ENCODE measurements at regions of chr5 and their contacts with region 1.

Region 1: GRCh38 chr5:119411935-119412602 is 40.2 kb upstream of the HSD17B4 start:
- DNase-seq: peak; percentile 66
- ATAC-seq: peak; percentile 84
- H3K4me3 Mint-ChIP-seq: peak overlapping the region; percentile 78
- H3K27ac Mint-ChIP-seq: peak overlapping the region; percentile 80
- H3K4me1 Mint-ChIP-seq: peaks cover 41% of the 10 kb centered on the region
- H3K27me3 Mint-ChIP-seq: no peaks in the 10 kb centered on the region
- CTCF ChIP-seq: peak; percentile 93

Region 2: GRCh38 chr5:118775799-118776499 is 636.1 kb before region 1 on chr5:
- CTCF ChIA-PET with region 1: no interaction called
- POLR2A ChIA-PET with region 1: no interaction called
- intact Hi-C with region 1: no loop called
- DNase-seq: no peak
- ATAC-seq: no peak
- H3K4me3 Mint-ChIP-seq: no peak overlapping the region
- H3K27ac Mint-ChIP-seq: no peak overlapping the region
- H3K4me1 Mint-ChIP-seq: no peaks in the 10 kb centered on the region
- H3K27me3 Mint-ChIP-seq: peaks cover 3% of the 10 kb centered on the region
- CTCF ChIP-seq: no peak

Region 3: DNA sequence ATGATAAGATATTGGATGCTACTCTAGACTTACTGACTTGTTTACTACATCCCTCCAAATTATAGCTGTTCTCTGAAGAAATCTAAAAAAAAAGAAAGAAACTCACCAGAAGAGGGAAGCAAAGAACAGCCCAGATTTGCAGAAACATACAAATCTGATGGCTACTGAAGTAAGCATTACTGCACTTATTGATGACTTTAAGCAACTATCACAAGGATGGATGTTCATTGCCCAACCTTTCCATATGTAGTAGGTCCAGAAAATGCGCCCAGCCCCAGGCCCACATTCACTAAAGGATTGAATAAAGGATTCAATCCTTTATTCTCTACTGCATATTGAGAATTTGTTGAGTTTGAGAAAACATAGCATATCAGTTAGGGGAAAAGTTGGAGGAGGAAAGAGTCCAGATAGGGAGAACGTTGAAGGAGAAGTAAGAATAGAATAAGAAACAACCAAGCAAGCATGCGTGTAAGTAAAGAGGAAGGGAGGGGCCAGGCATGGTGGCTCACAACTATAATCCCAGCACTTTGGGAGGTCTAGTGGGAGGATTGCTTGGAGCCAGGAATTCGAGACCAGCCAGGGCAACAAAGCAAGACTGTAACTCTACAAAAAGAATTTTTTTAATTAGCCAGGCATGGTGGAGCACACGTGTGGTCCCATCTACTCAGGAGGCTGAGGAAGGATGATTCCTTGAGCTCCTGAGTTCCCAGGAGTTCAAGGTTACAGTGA is 389.9 kb before region 1 on chr5:
- CTCF ChIA-PET with region 1: interaction called, 21 read pairs
- POLR2A ChIA-PET with region 1: interaction called, 3 read pairs
- intact Hi-C with region 1: loop called (anchors 5 kb)
- DNase-seq: no peak
- ATAC-seq: peak; percentile 72
- H3K4me3 Mint-ChIP-seq: no peak overlapping the region
- H3K27ac Mint-ChIP-seq: no peak overlapping the region
- H3K4me1 Mint-ChIP-seq: peaks cover 8% of the 10 kb centered on the region
- H3K27me3 Mint-ChIP-seq: no peaks in the 10 kb centered on the region
- CTCF ChIP-seq: peak; percentile 56

Region 4: GRCh38 chr5:119267958-119268386 is 144.1 kb before region 1 on chr5:
- CTCF ChIA-PET with region 1: interaction called, 22 read pairs
- POLR2A ChIA-PET with region 1: interaction called, 3 read pairs
- intact Hi-C with region 1: loop called (anchors 5 kb)
- DNase-seq: peak; percentile 97
- ATAC-seq: peak; percentile 80
- H3K4me3 Mint-ChIP-seq: peak overlapping the region; percentile 95
- H3K27ac Mint-ChIP-seq: peak overlapping the region; percentile 96
- H3K4me1 Mint-ChIP-seq: peaks cover 65% of the 10 kb centered on the region
- H3K27me3 Mint-ChIP-seq: no peaks in the 10 kb centered on the region
- CTCF ChIP-seq: peak; percentile 91

Region 5: GRCh38 chr5:119302916-119303897 is 108.9 kb before region 1 on chr5:
- CTCF ChIA-PET with region 1: interaction called, 13 read pairs
- POLR2A ChIA-PET with region 1: no interaction called
- intact Hi-C with region 1: no loop called
- DNase-seq: no peak
- ATAC-seq: peak; percentile 46
- H3K4me3 Mint-ChIP-seq: no peak overlapping the region
- H3K27ac Mint-ChIP-seq: peak overlapping the region; percentile 88
- H3K4me1 Mint-ChIP-seq: peaks cover 91% of the 10 kb centered on the region
- H3K27me3 Mint-ChIP-seq: no peaks in the 10 kb centered on the region
- CTCF ChIP-seq: no peak

Region 6: GRCh38 chr5:119335261-119335677 is 76.8 kb before region 1 on chr5:
- CTCF ChIA-PET with region 1: interaction called, 25 read pairs
- POLR2A ChIA-PET with region 1: interaction called, 4 read pairs
- intact Hi-C with region 1: no loop called
- DNase-seq: no peak
- ATAC-seq: no peak
- H3K4me3 Mint-ChIP-seq: peak overlapping the region; percentile 66
- H3K27ac Mint-ChIP-seq: peak overlapping the region; percentile 95
- H3K4me1 Mint-ChIP-seq: peaks cover 93% of the 10 kb centered on the region
- H3K27me3 Mint-ChIP-seq: no peaks in the 10 kb centered on the region
- CTCF ChIP-seq: no peak

Region 7: GRCh38 chr5:119367502-119368237 is 44.4 kb before region 1 on chr5:
- CTCF ChIA-PET with region 1: interaction called, 29 read pairs
- POLR2A ChIA-PET with region 1: interaction called, 9 read pairs
- intact Hi-C with region 1: no loop called
- DNase-seq: peak; percentile 48
- ATAC-seq: peak; percentile 65
- H3K4me3 Mint-ChIP-seq: peak overlapping the region; percentile 67
- H3K27ac Mint-ChIP-seq: peak overlapping the region; percentile 99
- H3K4me1 Mint-ChIP-seq: peaks cover 81% of the 10 kb centered on the region
- H3K27me3 Mint-ChIP-seq: no peaks in the 10 kb centered on the region
- CTCF ChIP-seq: no peak

Region 8: DNA sequence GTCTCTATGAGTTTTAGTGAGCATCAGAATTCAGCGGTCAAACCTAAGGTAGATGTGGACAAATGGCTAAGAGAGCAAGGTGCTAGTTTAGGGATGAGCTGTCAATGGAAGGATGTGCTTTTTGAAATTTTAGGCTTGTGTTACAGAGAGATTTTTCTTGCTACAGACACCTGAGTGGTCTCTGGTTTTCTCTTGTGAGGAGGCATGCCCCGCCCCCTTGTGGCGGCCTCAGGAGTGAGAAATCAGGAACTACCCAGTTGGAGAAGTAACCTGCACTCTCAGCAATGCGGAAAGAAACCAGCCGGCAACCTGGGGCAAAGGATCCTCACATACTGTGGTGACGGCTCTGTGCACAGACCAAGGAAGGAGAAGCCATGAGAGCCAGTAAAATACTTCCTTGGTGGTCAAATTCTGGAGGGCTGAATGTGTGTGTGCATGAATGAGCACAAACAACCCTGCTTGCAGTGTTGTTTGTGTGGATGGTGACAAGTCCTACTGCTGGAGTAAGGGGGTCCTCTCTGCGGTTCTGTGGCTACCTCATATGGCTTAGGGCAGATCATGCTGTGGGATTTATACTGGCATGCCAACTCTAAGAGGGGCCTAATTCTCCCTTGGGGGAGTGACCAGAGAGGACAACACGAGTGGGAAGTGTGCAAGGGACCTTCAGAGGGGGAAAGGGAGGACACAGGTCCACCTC is 23.5 kb after region 1 on chr5:
- CTCF ChIA-PET with region 1: interaction called, 30 read pairs
- POLR2A ChIA-PET with region 1: no interaction called
- intact Hi-C with region 1: no loop called
- DNase-seq: peak; percentile 89
- ATAC-seq: peak; percentile 78
- H3K4me3 Mint-ChIP-seq: no peak overlapping the region
- H3K27ac Mint-ChIP-seq: no peak overlapping the region
- H3K4me1 Mint-ChIP-seq: peaks cover 19% of the 10 kb centered on the region
- H3K27me3 Mint-ChIP-seq: peaks cover 4% of the 10 kb centered on the region
- CTCF ChIP-seq: peak; percentile 73

Region 9: DNA sequence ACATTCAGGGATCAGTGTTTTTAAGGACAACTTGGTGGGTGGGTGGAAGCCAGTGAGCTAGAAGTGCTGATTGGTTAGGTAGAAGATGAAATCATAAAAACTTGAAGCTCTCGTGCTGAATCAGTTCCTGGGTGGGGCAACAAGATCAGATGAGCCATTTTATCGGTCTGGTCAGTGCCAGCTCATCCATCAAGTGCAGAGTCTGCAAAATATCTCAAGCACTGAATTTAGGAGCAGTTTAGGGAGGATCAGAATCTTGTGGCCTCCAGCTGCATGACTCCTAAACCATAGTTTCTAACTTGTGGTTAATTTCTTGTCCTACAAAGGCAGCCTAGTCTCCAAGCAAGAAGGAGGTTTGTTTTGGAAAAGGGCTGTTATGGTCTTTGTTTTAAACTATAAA is 383.7 kb after region 1 on chr5:
- CTCF ChIA-PET with region 1: no interaction called
- POLR2A ChIA-PET with region 1: no interaction called
- intact Hi-C with region 1: no loop called
- DNase-seq: no peak
- ATAC-seq: no peak
- H3K4me3 Mint-ChIP-seq: no peak overlapping the region
- H3K27ac Mint-ChIP-seq: no peak overlapping the region
- H3K4me1 Mint-ChIP-seq: no peaks in the 10 kb centered on the region
- H3K27me3 Mint-ChIP-seq: peaks cover 1% of the 10 kb centered on the region
- CTCF ChIP-seq: no peak

Measured in activated CD8-positive, alpha-beta T cell treated with anti-CD3 and anti-CD28 coated beads for 36 hours (primary cell).